Ascending aorta (tissue), 2 donors: ENCODE measurements at regions of chr6 and their contacts with region 1.

Region 1: GRCh38 chr6:81752138-81752920 is at the start of gene TENT5A:
- DNase-seq: peak; percentile 82 to 96
- H3K4me3 ChIP-seq: peak within 1 kb of the TSS; percentile 82 to 93
- H3K27ac ChIP-seq: peak within 1 kb of the TSS; percentile 90 to 97
- H3K4me1 ChIP-seq: peaks cover 0 to 10% of the 10 kb centered on the region in 2 donors
- H3K27me3 ChIP-seq: no peaks in the 10 kb centered on the region
- CTCF ChIP-seq: peak in 1 of 3 experiments; percentile 11
- total RNA-seq, gene TENT5A: 9.6 TPM

Region 2: GRCh38 chr6:80214436-80215022 is 1537.8 kb before region 1 on chr6:
- intact Hi-C with region 1: loop called (anchors 10 kb)
- DNase-seq: no peak
- H3K4me3 ChIP-seq: no peak overlapping the region
- H3K27ac ChIP-seq: no peak overlapping the region
- H3K4me1 ChIP-seq: no peaks in the 10 kb centered on the region
- H3K27me3 ChIP-seq: no peaks in the 10 kb centered on the region
- CTCF ChIP-seq: peak; percentile 47 to 67 (median 62)

Region 3: GRCh38 chr6:81241126-81242041 is 510.9 kb before region 1 on chr6:
- intact Hi-C with region 1: loop called (anchors 5 kb)
- DNase-seq: no peak
- H3K4me3 ChIP-seq: no peak overlapping the region
- H3K27ac ChIP-seq: no peak overlapping the region
- H3K4me1 ChIP-seq: no peaks in the 10 kb centered on the region
- H3K27me3 ChIP-seq: no peaks in the 10 kb centered on the region
- CTCF ChIP-seq: peak; percentile 16 to 57 (median 29)

Region 4: GRCh38 chr6:81553216-81553615 is 199.1 kb before region 1 on chr6:
- intact Hi-C with region 1: loop called (anchors 5 kb)
- DNase-seq: no peak
- H3K4me3 ChIP-seq: no peak overlapping the region
- H3K27ac ChIP-seq: no peak overlapping the region
- H3K4me1 ChIP-seq: peaks cover 0 to 2% of the 10 kb centered on the region in 2 donors
- H3K27me3 ChIP-seq: no peaks in the 10 kb centered on the region
- CTCF ChIP-seq: no peak

Region 5: GRCh38 chr6:81690086-81690485 is 62.2 kb before region 1 on chr6:
- intact Hi-C with region 1: no loop called
- DNase-seq: no peak
- H3K4me3 ChIP-seq: no peak overlapping the region
- H3K27ac ChIP-seq: no peak overlapping the region
- H3K4me1 ChIP-seq: no peaks in the 10 kb centered on the region
- H3K27me3 ChIP-seq: no peaks in the 10 kb centered on the region
- CTCF ChIP-seq: no peak

Region 6: DNA sequence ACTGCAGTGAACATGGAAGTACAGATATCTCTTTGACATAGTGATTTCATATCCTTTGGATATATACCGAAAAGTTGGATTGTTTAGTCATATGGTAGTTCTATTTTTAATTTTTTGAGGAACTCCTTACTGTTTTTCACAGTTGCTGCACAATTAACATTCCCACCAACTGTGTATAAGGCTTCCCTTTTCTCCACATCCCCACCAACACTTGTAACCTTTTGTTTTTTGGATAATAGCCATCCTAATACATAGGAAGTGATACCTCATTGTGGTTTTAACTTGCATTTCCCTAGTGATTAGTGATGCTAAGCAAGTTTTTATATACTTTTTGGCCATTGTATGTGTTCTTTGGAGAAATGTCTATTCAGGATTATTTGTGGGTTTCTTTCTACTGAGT is 45.3 kb after region 1 on chr6:
- intact Hi-C with region 1: no loop called
- DNase-seq: no peak
- H3K4me3 ChIP-seq: no peak overlapping the region
- H3K27ac ChIP-seq: no peak overlapping the region
- H3K4me1 ChIP-seq: no peaks in the 10 kb centered on the region
- H3K27me3 ChIP-seq: no peaks in the 10 kb centered on the region
- CTCF ChIP-seq: no peak

Region 7: GRCh38 chr6:81981812-81982211 is 229.5 kb after region 1 on chr6:
- intact Hi-C with region 1: loop called (anchors 5 kb)
- DNase-seq: no peak
- H3K4me3 ChIP-seq: peak overlapping the region in 1 of 2 donors; percentile 22
- H3K27ac ChIP-seq: peak overlapping the region; percentile 46 to 71
- H3K4me1 ChIP-seq: no peaks in the 10 kb centered on the region
- H3K27me3 ChIP-seq: no peaks in the 10 kb centered on the region
- CTCF ChIP-seq: no peak

Region 8: GRCh38 chr6:82144007-82144851 is 391.9 kb after region 1 on chr6:
- intact Hi-C with region 1: loop called (anchors 10 kb)
- DNase-seq: peak; percentile 15 to 79
- H3K4me3 ChIP-seq: peak overlapping the region in 1 of 2 donors; percentile 46
- H3K27ac ChIP-seq: peak overlapping the region; percentile 56 to 64
- H3K4me1 ChIP-seq: peaks cover 0 to 13% of the 10 kb centered on the region in 2 donors
- H3K27me3 ChIP-seq: no peaks in the 10 kb centered on the region
- CTCF ChIP-seq: no peak

Region 9: DNA sequence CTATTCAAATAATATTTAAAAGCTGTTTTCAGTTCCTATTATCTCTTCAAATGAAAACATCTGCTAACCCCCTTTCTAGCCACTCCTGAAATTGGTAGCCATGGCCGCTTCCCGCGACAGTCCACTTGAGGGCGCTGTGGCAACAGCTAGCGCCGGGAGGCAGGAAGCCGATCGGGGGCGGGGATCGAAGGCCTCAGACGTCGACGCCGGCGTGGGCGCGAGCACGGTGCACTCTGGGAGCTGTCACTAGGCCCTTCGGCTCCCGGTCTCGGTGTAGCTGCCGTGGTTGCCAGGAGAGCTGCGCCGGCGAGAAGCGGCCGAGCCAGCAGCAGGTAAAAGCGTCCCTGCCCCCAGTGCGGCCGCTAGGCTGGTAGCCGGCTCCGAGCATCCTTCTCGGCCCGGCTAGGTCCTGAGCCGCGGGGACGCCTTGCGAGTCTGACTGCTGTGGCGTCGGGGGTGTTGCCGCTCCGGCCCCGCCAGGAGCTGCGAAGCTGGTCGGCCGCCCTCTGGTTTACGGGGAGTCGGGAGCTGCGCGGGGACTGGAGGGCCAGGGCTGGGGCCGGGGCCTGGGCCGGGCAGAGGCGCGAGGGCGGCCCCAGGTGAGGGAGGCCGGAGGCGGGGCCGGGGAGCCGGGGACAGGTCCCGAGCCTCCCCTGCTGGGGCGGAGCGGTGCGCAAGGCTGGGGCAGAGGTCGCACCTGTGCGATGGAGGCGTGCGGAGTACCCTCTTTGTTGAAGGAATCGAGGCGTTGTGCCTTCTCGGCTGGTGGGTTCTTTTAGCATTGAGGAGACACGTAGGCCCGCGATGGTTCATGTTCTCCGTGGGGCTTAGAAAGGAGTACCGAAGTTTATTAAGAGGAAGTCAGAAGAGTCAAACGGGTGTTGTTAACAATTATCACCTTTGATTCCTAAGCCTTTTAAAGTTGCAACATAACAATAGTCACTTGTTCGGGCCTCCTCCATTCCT is 1315.4 kb after region 1 on chr6 and contains the start of gene DOP1A:
- intact Hi-C with region 1: loop called (anchors 5 kb)
- DNase-seq: peak; percentile 75 to 97
- H3K4me3 ChIP-seq: peak within 1 kb of the TSS; percentile 66 to 95
- H3K27ac ChIP-seq: peak within 1 kb of the TSS; percentile 87 to 93
- H3K4me1 ChIP-seq: peaks cover 0 to 8% of the 10 kb centered on the region in 2 donors
- H3K27me3 ChIP-seq: no peaks in the 10 kb centered on the region
- CTCF ChIP-seq: peak; percentile 82 to 99 (median 98)
- total RNA-seq, gene DOP1A: 13.2 TPM